GM10248 (cell line): ENCODE measurements at regions of chr1 and their contacts with region 1.

Region 1: GRCh38 chr1:63454269-63454668 is 68.8 kb downstream of the ITGB3BP start:
- DNase-seq: no peak
- CTCF ChIP-seq: no peak

Region 2: DNA sequence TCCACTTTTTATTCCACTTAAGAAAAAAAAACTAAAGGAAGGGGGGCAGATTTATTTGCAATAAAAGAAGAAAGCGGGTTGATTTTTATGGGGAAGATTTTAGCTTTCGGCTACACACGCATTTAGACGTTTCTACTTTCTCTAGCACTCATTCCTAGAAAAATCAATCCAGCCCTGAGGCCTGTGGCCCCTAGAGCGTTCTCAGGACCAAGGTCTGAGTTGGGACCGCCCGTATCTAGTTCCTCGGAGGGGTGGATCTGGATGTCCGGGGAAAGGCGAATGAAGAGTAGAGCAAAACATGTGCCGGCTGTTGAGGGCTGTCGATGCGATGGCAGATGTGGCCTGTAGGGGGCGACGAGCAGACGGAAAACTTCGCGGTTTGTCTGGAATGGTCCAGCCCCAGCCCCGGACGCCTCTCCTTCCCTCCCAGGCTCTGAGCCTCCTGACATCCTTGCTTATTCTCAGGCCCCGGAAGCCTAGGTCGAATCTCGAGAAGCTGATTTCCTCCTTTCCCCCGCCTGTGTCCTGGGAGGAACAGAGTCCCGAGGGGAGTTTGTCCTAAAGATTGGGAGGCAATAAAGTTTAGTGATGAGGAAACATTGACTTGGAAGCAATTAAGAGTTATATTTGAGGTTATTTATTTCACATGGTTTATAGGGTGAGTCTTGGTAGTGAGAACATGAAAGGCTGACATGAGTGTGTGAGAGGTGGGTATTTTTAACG is 126.7 kb before region 1 on chr1:
- CTCF ChIA-PET with region 1: no interaction called
- POLR2A ChIA-PET with region 1: no interaction called
- DNase-seq: peak; percentile 79
- CTCF ChIP-seq: peak; percentile 81

Region 3: DNA sequence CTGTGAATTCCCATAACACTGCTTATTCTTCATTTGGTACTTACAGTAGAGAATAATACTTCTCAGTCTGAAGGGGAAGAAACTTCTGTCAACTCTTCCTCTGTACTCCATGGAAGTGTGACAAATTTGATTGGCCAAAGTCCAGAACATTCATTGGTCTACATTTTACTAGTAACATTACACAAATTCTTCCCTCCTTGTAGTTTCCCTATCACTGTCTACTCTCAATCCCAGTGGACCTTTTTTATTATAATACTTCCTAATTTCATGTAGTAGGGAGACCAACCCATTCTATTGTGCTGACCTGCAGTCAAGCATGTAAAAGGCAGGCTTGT is 12.2 kb before region 1 on chr1:
- CTCF ChIA-PET with region 1: interaction called, 11 read pairs
- POLR2A ChIA-PET with region 1: no interaction called
- DNase-seq: no peak
- CTCF ChIP-seq: no peak